PC-3 (cell line): ENCODE measurements at regions of chr7 and their contacts with region 1.

Region 1: DNA sequence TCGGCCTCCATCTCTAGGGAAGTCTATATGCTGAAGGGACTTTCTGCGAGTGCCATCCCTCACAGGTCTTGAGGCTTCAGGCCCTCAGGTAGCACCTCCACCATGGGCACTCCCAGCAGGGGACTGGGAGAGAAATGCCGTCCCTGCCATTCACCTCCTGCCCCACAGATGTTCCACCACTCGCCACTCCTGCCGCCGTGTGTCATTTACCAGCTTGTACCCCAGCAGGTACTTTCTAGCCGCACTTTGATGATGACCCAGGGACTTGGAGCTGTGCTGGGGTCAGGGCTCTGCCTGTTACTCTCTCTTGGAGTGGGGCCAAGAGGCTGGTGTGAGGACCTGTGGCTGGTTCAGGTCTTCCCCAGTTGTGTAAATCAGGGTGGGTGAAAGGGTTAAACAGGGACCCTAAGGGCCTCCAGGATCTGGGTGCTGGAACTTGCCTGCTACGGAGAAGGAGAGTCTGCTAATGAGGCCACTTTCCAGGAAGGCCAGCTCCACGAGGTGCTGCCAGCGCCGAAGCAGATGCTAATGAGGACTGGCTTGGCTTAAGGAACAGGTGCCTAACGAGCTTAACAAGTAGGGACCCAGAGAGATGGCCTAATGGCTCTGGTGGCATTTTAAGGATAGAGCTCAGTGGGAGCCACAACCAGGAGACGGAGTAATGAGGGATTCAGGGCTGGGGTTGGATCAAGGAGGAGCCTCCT is 32.4 kb downstream of the CRHR2 start:
- DNase-seq: no peak
- ATAC-seq: no peak
- H3K4me3 ChIP-seq: no peak overlapping the region
- H3K27ac ChIP-seq: no peak overlapping the region
- H3K4me1 ChIP-seq: no peaks in the 10 kb centered on the region
- H3K27me3 ChIP-seq: no peaks in the 10 kb centered on the region
- CTCF ChIP-seq: no peak

Region 2: DNA sequence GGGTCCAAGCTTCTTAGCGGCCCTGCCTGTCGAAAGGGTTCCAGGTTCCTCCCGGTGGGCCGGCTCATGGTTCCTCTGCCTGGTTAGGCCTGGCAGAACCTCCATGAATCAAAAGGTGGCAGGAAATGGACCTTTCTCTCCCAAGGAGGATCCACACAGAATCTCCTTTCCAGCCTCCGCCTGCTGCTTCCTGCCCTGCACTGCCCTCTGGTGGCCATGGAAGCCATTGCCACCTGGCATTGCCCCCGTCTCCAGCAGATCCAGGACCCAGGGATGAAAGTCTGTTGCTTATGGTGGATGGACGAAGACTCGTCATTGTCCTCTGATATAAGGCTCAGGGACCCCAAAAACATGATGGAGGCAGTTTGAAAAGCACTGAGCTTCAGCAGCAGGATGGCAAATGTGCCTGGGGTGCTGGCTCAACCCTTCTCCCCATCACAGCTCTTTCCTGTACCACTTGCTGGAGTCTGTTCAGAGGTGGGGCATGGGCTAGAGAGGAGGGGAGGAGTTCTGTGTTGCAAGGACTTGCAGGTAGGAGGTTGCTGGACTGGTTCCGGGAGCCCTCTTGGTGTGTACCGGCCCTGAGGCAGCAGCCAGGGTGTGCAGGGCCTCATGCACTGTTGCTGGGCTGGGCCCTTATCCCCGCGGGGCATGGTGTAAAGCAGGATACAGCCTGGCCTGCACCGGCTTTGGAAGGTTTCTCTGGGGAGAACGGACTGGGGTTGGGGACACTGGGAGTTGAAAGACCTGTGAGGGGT is 90.7 kb after region 1 on chr7:
- CTCF ChIA-PET with region 1: no interaction called
- POLR2A ChIA-PET with region 1: no interaction called
- intact Hi-C with region 1: loop called (anchors 5 kb)
- DNase-seq: peak; percentile 80
- ATAC-seq: peak; percentile 85
- H3K4me3 ChIP-seq: no peak overlapping the region
- H3K27ac ChIP-seq: no peak overlapping the region
- H3K4me1 ChIP-seq: no peaks in the 10 kb centered on the region
- H3K27me3 ChIP-seq: peaks cover 18% of the 10 kb centered on the region
- CTCF ChIP-seq: peak; percentile 94

Region 3: DNA sequence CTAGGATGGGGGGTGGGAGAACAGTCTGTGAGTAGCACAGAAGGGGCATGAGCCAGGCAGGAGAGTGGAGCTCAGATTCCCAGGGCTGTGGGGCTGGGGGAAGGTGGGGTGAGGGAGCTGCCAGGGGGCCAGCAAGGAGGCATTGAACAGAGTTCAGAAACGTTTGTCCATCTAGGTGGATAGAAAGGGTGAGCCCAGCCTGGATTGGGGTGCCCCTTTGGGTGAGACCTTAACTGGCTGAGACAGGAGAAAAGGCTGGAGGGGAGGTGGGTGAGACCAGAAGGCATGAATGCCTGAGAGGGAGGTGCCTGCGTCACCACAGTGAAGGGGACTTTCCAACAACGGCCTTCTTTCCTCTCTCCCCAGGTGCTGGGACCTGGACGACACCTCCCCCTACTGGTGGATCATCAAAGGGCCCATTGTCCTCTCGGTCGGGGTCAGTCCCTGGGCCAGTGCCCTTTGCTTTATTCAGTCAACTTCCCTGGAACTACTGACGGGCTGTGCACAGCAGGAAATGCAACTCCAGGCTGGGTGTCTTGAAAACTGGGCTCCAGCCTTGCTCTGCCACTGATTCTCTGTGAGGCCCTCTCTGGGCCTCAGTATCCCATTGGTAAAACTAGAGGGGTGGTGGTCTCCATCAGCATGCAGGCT is 324.9 kb after region 1 on chr7:
- CTCF ChIA-PET with region 1: no interaction called
- POLR2A ChIA-PET with region 1: no interaction called
- intact Hi-C with region 1: no loop called
- DNase-seq: peak; percentile 69
- ATAC-seq: peak; percentile 67
- H3K4me3 ChIP-seq: no peak overlapping the region
- H3K27ac ChIP-seq: no peak overlapping the region
- H3K4me1 ChIP-seq: peaks cover 8% of the 10 kb centered on the region; the same call in 1 of the 2 replicates
- H3K27me3 ChIP-seq: peaks cover 14% of the 10 kb centered on the region; the same call in 1 of the 2 replicates
- CTCF ChIP-seq: peak; percentile 82